HEK293T (cell line): ENCODE measurements at regions of chr3 and their contacts with region 1.

Region 1: DNA sequence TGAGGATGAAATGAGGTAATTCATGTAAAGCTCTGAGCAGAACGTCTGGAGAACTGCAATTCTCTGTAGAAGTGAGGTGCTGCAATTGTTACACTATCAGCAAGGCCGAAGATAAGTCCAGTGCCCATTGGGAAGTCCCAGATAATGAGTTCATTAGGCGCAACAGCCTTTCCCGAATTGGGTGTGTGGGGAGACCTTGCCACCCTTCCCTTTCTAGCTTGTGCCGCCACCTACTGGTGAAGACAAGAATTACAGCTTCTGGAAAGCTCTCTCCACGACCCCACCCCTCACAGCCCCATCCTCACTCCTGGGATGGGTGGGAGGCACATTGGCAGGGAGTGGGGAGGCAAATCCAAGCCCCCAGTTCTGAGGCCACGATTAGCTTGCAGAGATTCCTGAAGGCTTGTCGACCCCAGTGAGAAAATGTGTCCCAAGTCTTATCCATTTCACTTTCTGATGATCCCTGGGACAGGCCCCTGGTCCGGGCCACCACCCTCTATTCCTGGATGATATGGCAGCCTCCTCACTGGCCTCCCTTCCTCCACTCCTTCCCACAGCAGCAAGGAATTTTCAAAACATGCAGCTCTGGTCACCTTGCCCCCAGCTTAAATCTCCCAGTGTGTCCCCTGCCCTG is 36.4 kb downstream of the FAM3D start:
- DNase-seq: peak; percentile 76

Region 2: GRCh38 chr3:58568572-58569286 is 61.5 kb before region 1 on chr3:
- CTCF ChIA-PET with region 1: interaction called, 50 read pairs
- POLR2A ChIA-PET with region 1: interaction called, 3 read pairs
- DNase-seq: peak; percentile 78

Region 3: GRCh38 chr3:58666683-58667082 is 36.5 kb after region 1 on chr3 and contains the start of gene FAM3D:
- CTCF ChIA-PET with region 1: no interaction called
- POLR2A ChIA-PET with region 1: no interaction called
- DNase-seq: no peak

Region 4: DNA sequence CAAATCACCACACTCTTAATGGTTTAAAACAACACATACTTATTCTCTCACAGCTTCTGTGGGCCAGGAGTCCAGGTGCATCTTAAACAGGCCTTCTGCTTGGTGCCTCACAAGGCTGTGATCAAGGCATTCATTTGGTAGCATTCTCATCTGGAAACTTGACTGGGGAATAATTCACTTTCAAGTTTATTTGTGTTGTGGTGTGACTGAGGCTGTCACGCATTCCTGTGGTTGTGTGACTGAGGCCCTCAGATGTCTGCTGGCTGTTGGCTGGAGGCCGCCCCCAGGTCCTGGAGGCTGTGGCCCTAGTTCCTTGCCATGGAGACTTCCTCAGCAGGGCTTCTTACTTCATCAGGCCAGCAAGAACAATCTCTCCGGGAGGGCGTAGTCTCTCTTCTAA is 53.3 kb after region 1 on chr3:
- CTCF ChIA-PET with region 1: no interaction called
- POLR2A ChIA-PET with region 1: no interaction called
- DNase-seq: no peak

Region 5: GRCh38 chr3:58693929-58694850 is 64.0 kb after region 1 on chr3:
- CTCF ChIA-PET with region 1: no interaction called
- POLR2A ChIA-PET with region 1: no interaction called
- DNase-seq: no peak